Cardiac septum (tissue), 1 donor: ENCODE measurements at regions of chr3 and their contacts with region 1.

Region 1: DNA sequence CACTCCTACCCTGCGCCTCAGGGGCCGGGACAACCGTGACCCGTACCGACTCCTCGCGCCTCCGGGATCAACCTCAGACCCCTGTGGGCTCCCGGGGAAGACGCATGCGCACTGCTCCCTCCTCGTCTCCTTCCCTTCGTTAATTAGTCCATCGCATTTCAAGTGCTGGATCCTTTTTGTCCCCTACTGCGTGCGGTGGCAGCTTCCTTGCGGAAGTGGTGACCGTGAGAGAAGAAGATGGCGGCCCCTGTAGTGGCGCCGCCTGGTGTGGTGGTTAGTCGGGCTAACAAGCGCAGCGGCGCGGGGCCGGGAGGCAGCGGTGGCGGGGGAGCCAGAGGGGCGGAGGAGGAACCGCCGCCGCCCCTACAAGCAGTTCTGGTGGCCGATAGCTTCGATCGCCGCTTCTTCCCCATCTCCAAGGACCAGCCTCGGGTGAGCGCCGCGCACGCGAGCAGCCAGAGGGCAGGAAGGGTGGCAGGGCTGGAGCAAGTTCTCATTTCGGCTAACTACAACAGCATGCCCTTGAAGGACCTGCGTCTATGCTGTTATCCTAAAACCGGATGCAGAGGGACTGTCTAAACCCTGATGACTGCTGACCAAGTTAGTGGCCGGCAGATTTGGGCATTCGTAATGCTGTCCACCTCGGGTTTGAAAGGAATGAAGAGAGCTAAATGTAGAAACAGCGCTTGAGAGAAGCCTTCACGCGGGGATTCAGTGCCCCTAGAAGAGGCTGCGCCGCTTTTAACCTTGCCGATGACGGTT is at the start of gene EIF2B5:
- DNase-seq: peak; percentile 96
- total RNA-seq, gene EIF2B5: 33.4 TPM

Region 2: DNA sequence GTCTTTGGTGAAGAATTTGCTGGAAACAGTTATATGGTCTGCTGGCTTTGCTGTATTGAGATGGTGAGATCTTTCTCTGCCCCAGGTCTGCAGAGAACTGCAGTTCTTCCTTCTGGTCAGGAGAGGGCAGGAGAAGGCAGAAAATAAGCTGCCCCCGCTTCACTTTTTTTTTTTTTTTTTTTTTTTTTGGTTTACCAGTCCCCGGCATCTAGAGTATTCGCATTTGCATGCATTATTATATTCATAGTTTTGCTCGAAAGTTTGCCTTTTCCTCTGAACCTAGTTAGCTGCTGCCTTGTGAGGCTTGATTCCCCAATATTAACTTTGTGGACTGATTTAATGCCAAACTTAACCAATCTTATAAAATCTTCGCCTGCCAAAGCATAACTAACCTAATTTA is 240.0 kb before region 1 on chr3:
- intact Hi-C with region 1: loop called (anchors 5 kb)
- DNase-seq: no peak

Region 3: GRCh38 chr3:184017672-184018423 is 117.5 kb before region 1 on chr3 and contains the start of gene ABCC5:
- intact Hi-C with region 1: loop called (anchors 2 kb)
- DNase-seq: peak; percentile 97
- total RNA-seq, gene ABCC5: 34.6 TPM

Region 4: GRCh38 chr3:184154885-184155643 is 19.7 kb after region 1 on chr3 and contains the start of gene DVL3:
- intact Hi-C with region 1: loop called (anchors 1 kb)
- DNase-seq: peak; percentile 84
- total RNA-seq, gene DVL3: 68.6 TPM

Region 5: DNA sequence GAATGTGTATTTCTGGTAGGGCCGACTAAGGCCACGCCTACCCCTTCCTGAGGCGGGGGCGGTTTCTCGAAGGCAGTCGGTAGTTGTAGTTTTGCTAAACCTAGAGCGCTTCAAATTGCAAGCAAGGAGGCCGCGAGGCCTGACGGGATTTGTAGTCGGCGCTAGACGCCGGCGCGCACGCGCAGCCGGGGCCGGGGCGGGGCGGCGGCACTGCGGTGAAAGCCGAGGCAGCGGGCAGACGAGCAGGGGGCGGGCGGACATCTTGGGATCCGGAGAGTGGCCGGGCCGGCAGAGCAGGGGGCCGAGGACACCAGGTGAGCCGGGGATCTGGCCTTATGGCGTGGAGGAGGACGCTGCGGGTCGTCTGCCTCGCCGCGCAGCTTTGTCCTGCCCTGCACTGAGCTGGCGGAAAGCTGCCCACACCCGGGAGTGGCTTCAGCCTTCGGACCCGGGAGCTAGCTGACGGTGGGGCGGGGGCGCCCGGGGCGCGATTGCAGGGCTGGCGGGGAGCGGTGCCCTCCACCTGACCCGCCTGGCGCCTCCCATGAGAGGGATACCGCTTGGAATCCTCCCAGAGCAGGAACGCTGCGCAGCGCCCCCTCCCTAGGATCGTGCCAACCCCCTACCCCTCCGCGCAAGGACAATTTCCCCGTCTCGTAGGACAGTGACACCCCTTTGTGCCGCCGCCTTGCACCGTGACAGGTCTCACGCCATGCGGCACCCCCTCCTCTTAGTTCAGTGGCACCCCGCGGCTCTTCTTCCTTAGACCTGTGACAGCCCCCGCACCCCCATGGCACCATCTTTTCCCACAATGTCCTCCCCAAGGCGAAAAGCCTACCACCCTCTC is 39.5 kb after region 1 on chr3 and contains the start of gene AP2M1:
- intact Hi-C with region 1: loop called (anchors 1 kb)
- DNase-seq: peak; percentile 99
- total RNA-seq, gene AP2M1: 317 TPM

Region 6: GRCh38 chr3:184185461-184186308 is 50.4 kb after region 1 on chr3 and contains the start of gene ABCF3:
- intact Hi-C with region 1: loop called (anchors 1 kb)
- DNase-seq: peak; percentile 100
- total RNA-seq, gene ABCF3: 61.5 TPM

Region 7: GRCh38 chr3:184561061-184561912 is 426.0 kb after region 1 on chr3 and contains the start of gene EPHB3:
- intact Hi-C with region 1: no loop called
- DNase-seq: peak; percentile 99
- total RNA-seq, gene EPHB3: 3.6 TPM